ENCODE measurements at regions of chr1 and their contacts with region 1.

Region 1: GRCh38 chr1:34419663-34420136 is 243.0 kb downstream of the C1orf94 start:
- DNase-seq: peak; percentile 57
- ATAC-seq: peak; percentile 98
- H3K4me3 Mint-ChIP-seq: no peak overlapping the region
- H3K27ac Mint-ChIP-seq: no peak overlapping the region
- H3K4me1 Mint-ChIP-seq: peaks cover 8% of the 10 kb centered on the region
- H3K27me3 Mint-ChIP-seq: peaks cover 5% of the 10 kb centered on the region; the same call in 1 of the 2 replicates
- CTCF ChIP-seq: no peak

Region 2: DNA sequence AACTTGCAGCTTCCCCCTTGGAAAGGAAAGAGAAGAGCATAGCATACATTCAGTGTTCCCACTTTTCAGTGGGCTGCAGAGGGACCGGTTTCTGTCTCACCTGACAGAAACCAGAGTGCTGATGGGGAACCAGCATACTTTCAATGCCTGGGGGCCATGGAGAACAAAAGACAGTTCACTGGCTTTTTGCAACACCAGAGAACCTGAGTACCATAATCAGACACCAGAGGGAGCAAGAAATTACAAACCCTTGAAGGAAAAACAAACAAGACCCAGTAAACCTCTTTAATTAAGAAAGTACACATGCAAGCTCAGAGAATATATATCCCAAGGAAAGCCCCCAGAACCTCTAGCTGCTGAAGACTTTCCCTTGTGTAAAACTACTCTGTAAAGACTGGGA is 305.8 kb before region 1 on chr1:
- CTCF ChIA-PET with region 1: interaction called, 10 read pairs
- POLR2A ChIA-PET with region 1: no interaction called
- DNase-seq: peak; percentile 35
- ATAC-seq: peak; percentile 86
- H3K4me3 Mint-ChIP-seq: no peak overlapping the region
- H3K27ac Mint-ChIP-seq: peak overlapping the region; percentile 89
- H3K4me1 Mint-ChIP-seq: peaks cover 23% of the 10 kb centered on the region
- H3K27me3 Mint-ChIP-seq: no peaks in the 10 kb centered on the region
- CTCF ChIP-seq: peak; percentile 52; the same call in 1 of the 2 replicates

Region 3: DNA sequence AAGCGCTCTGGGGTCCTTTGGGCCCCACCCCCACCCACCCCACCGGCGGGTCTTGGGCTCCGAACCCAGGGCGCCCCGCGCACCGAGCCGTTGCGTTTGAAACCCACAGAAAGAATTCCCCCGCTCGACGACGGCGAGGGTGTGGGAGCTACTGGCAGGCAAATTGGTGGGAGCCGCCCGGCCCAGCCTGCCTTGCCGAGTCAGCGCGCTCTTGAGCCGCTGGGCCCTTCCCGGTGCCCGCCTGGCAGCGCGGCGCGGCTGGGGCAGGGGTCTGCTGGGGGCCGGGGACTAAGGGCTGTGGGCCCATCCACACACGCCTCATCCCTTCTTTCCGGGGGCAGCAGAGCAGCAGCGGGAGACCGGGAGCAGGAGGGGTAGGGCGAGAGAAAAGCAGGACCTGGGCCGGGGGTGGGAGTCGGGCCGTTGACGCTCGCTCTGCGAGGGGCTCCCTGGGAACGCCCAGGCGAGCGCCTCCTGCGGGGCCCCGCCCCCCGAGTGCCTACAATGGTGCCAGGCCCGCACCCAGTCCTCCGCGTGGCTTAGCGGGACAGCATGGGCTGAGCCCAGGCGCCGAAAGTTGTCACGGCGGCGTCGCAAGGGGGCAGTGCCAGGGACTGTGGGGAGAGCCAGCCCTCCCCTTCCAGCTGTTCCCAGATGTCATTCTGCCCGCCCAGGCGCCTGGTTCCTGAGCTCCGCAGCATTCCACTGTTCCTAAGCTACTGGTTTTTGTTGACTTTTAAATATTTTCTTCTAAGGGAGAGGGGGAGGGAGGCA is 242.7 kb before region 1 on chr1 and contains the start of gene C1orf94:
- CTCF ChIA-PET with region 1: interaction called, 10 read pairs
- POLR2A ChIA-PET with region 1: no interaction called
- DNase-seq: peak; percentile 56
- ATAC-seq: peak; percentile 71
- H3K4me3 Mint-ChIP-seq: peak within 1 kb of the TSS; percentile 56
- H3K27ac Mint-ChIP-seq: no peak within 1 kb of the TSS
- H3K4me1 Mint-ChIP-seq: peaks cover 58% of the 10 kb centered on the region
- H3K27me3 Mint-ChIP-seq: peaks cover 15% of the 10 kb centered on the region
- CTCF ChIP-seq: no peak
- total RNA-seq, gene C1orf94: 5.5 to 6.0 TPM (median 5.5 TPM) in 3 replicates

Region 4: GRCh38 chr1:34342334-34342733 is 77.4 kb before region 1 on chr1:
- CTCF ChIA-PET with region 1: interaction called, 10 read pairs
- POLR2A ChIA-PET with region 1: no interaction called
- DNase-seq: no peak
- ATAC-seq: no peak
- H3K4me3 Mint-ChIP-seq: no peak overlapping the region
- H3K27ac Mint-ChIP-seq: no peak overlapping the region
- H3K4me1 Mint-ChIP-seq: no peaks in the 10 kb centered on the region
- H3K27me3 Mint-ChIP-seq: peaks cover 37% of the 10 kb centered on the region
- CTCF ChIP-seq: no peak

Region 5: DNA sequence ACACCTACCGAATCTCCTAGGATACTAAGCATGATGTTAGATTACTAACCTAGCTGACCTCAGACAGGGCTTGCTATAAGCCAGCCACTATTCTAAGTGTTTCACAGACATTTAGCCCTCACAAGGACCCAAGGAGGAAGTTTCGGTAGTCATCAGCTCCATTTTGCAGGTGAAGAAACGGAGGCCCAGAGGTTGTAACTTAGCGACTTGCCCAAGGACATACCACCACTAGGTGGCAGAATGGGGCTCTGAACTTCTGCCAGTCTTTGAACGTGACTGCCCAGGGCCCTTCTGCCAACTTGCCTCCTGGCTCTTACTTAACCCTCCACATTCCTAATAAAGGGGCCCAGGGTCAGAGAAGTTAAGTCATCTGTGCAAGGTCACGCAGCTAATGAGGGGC is 40.5 kb after region 1 on chr1:
- CTCF ChIA-PET with region 1: interaction called, 10 read pairs
- POLR2A ChIA-PET with region 1: no interaction called
- DNase-seq: peak; percentile 74
- ATAC-seq: peak; percentile 64
- H3K4me3 Mint-ChIP-seq: no peak overlapping the region
- H3K27ac Mint-ChIP-seq: no peak overlapping the region
- H3K4me1 Mint-ChIP-seq: no peaks in the 10 kb centered on the region
- H3K27me3 Mint-ChIP-seq: peaks cover 8% of the 10 kb centered on the region
- CTCF ChIP-seq: peak; percentile 61

Measured in WTC11 (cell line).